Mammary epithelial cell (primary cell): ENCODE measurements at regions of chr12 and their contacts with region 1.

Region 1: GRCh38 chr12:118912697-118913270 is 68.6 kb upstream of the SRRM4 start:
- DNase-seq: no peak
- H3K4me3 ChIP-seq: no peak overlapping the region
- H3K27ac ChIP-seq: no peak overlapping the region
- H3K4me1 ChIP-seq: no peaks in the 10 kb centered on the region
- H3K27me3 ChIP-seq: no peaks in the 10 kb centered on the region
- CTCF ChIP-seq: no peak

Region 2: DNA sequence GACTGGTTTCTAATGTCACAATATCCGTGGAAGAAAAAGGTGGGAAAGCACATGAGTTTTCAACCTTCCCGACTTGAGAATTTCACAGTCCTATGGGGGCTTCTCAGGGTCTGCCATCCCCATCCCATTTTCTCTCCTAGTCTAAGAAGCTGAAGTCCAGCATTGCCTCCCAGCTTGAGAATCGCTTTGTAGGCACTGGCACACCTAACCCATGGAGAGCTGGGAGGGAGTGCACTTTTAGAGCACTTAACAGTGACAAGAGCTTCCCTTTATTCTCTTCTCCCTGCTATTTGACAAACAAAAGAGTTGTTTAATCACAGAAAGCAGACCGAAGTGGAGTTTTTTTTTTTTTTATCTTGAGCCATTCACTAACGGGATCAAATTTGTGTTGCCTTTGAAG is 45.7 kb after region 1 on chr12:
- CTCF ChIA-PET with region 1: no interaction called
- dilution Hi-C with region 1: loop called (anchors 5 kb)
- in situ Hi-C with region 1: no loop called
- intact Hi-C with region 1: no loop called
- DNase-seq: no peak
- H3K4me3 ChIP-seq: no peak overlapping the region
- H3K27ac ChIP-seq: no peak overlapping the region
- H3K4me1 ChIP-seq: no peaks in the 10 kb centered on the region
- H3K27me3 ChIP-seq: no peaks in the 10 kb centered on the region
- CTCF ChIP-seq: no peak